Mammary epithelial cell (primary cell): ENCODE measurements at regions of chr19 and their contacts with region 1.

Region 1: DNA sequence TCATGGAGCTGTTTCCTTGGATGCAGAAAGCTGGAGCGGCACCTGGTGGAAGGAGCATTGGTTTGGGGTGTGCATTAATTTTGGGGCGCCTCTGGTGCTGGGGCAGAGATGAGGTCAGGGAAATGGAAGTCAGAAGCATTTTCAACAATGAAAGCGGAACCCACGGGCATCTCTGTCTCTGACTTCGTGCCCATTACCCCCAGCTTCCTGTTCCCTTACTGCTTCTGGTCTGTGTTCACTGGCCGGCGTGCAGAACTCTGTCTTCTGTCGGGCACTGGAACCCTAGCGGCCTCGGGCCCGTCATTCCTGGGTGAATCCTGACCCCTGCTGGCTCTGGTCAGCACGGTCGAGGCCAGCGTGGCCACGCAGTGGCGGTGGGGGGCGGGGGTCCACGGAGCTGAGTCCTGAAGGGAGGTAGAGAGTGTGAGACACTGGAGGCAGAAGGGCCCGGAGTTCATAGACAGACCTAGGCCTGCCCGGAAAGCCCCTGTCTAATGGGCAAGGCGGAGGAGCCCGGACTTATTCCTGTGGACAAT is 7.9 kb upstream of the LINGO3 start:
- DNase-seq: no peak
- H3K4me3 ChIP-seq: no peak overlapping the region
- H3K27ac ChIP-seq: no peak overlapping the region
- H3K4me1 ChIP-seq: no peaks in the 10 kb centered on the region
- H3K27me3 ChIP-seq: no peaks in the 10 kb centered on the region
- CTCF ChIP-seq: peak in 1 of 2 donors; percentile 18

Region 2: DNA sequence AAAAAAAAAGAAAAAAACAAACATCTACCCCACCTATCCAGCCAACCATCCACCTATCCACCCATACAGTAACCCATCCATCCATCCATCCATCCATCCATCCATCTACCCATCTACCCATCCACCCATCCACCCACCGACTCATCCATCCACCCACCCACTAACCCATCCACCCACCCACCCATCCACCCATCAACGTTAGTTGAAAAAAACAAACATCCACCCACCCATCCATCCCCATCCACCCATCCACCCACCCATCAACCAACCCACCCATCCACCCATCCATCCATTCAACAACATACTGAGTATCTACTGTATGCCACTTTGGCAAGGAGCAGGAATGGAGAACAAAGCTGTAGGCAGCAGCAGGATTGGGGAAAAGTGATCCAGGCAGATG is 158.4 kb before region 1 on chr19:
- CTCF ChIA-PET with region 1: no interaction called
- dilution Hi-C with region 1: no loop called
- in situ Hi-C with region 1: no loop called
- intact Hi-C with region 1: loop called (anchors 2 kb)
- DNase-seq: no peak
- H3K4me3 ChIP-seq: no peak overlapping the region
- H3K27ac ChIP-seq: no peak overlapping the region
- H3K4me1 ChIP-seq: peaks cover 8% of the 10 kb centered on the region
- H3K27me3 ChIP-seq: no peaks in the 10 kb centered on the region
- CTCF ChIP-seq: no peak